H1 (cell line): ENCODE measurements at regions of chr5 and their contacts with region 1.

Region 1: DNA sequence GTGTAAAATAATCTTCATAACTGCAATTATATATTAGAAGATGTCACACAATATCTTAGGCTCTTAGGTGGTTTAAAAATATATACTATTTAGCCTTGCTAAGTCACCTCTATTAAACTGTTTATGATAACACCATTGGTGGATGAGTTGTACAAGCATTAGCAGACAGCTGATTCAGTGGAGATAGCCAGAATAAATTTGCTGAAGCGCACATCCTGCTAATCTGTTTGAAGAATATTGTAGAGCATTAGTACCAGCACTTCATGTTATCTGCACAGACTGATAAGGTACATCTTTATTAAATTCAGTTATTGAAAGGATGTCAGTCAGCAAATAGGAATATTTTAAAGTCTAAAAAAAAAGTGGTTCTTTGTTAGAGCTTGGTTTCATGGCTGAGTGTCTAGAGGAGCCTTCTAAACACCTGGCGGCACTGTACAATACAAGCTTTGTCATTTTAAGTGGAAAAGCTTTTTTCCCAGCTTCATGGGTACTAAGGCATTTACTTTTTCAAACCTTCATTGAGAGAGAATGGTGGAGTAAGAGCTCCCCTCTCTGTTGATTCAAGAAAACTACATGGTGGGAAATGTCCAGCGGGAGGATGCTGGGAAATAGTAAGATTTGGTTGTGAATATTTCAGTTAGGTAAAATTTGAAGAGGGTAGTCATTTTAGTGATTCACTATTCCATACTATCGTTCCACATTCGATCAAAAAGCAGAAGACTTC is 275.1 kb downstream of the SLF1 start:
- DNase-seq: no peak
- H3K4me3 ChIP-seq: no peak overlapping the region
- H3K27ac ChIP-seq: no peak overlapping the region
- H3K4me1 ChIP-seq: no peaks in the 10 kb centered on the region
- H3K27me3 ChIP-seq: no peaks in the 10 kb centered on the region
- CTCF ChIP-seq: peak in 2 of 3 experiments; percentile 58 to 66; a peak in 2 of 4 replicates
- EP300 ChIP-seq: no peak
- POLR2A ChIP-seq: no peak
- RAD21 ChIP-seq: peak; percentile 93 to 94

Region 2: DNA sequence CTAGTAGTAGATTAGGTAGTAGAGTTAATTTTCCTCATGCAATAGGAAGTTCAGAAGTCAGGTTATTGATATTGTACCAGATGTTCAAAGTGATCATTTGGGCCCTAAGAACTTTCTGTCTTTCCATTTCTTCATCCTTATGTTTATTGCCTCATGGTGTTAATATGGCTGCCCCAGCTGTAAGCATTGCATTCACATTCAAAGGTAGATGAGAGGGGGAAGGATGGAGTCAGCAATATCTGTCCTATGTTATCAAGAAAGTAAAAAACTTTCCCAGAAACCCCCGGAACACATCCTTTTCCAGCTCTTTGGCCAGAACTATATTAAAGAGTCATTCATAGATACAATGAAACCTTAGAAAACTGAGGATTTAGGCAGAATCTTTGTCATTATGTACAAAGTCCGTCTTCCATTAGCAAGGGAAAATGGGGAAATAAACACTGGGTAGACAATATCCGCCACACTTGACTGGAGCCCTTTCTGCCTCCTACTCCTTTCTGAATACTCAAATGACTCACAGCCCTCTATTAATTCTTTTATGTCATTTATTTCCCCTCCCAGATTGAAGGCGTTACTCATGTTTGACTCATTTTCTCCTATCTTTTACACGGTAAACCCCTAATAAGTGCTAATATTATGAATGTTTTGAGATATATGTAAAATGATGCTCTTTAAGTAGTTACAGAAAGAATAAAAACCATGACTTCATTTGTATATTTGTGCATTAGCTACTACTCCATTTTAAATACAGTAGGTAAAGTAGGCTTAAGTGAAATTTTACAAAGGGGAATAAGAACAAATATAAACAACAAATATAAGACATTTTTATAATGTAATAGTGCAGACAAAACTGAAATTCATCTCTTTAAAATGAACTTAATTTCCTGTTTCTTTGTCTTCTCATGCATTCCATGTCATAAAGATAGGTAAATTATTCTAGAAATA is 147.5 kb before region 1 on chr5:
- CTCF ChIA-PET with region 1: interaction called, 11 read pairs
- POLR2A ChIA-PET with region 1: no interaction called
- DNase-seq: no peak
- H3K4me3 ChIP-seq: no peak overlapping the region
- H3K27ac ChIP-seq: no peak overlapping the region
- H3K4me1 ChIP-seq: no peaks in the 10 kb centered on the region
- H3K27me3 ChIP-seq: no peaks in the 10 kb centered on the region
- CTCF ChIP-seq: no peak
- EP300 ChIP-seq: no peak
- POLR2A ChIP-seq: no peak
- RAD21 ChIP-seq: no peak

Region 3: GRCh38 chr5:94870511-94871183 is 22.9 kb before region 1 on chr5:
- CTCF ChIA-PET with region 1: interaction called, 12 read pairs
- POLR2A ChIA-PET with region 1: no interaction called
- DNase-seq: no peak
- H3K4me3 ChIP-seq: no peak overlapping the region
- H3K27ac ChIP-seq: no peak overlapping the region
- H3K4me1 ChIP-seq: no peaks in the 10 kb centered on the region
- H3K27me3 ChIP-seq: no peaks in the 10 kb centered on the region
- CTCF ChIP-seq: no peak
- EP300 ChIP-seq: no peak
- POLR2A ChIP-seq: no peak
- RAD21 ChIP-seq: no peak

Region 4: DNA sequence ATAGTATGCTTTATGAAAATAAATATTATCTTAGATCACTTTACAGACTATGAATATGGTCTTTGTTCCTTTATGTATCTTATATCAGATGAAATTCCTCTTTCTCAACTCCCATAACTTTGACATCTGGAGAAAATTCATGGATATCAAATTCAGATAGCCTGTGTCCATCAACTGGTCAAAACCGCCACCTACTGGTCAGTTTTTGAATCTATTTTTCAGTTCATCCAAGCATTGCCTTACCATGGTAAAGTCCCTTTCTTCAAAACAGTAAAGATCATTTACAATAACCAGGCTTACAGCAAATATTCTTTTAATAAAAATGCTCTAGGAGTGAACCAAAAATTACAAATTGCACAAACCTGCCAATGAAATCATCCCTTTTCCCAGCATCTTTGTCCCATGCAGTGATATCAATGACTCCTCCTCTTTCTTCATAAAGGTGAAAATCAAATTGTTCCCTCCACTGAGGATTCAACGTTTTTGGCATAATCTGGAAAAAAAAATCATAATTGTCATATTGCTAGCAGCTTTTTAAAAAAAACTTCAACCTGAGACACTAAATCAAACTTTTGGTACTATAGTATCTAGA is 15.4 kb after region 1 on chr5:
- CTCF ChIA-PET with region 1: interaction called, 16 read pairs
- POLR2A ChIA-PET with region 1: no interaction called
- DNase-seq: no peak
- H3K4me3 ChIP-seq: no peak overlapping the region
- H3K27ac ChIP-seq: no peak overlapping the region
- H3K4me1 ChIP-seq: no peaks in the 10 kb centered on the region
- H3K27me3 ChIP-seq: no peaks in the 10 kb centered on the region
- CTCF ChIP-seq: peak in 2 of 3 experiments; percentile 49 to 70; a peak in 2 of 4 replicates
- EP300 ChIP-seq: no peak
- POLR2A ChIP-seq: no peak
- RAD21 ChIP-seq: peak; percentile 70 to 74